Activated T-helper 1 cell treated with anti-CD3 and anti-CD28 coated beads, Interleukin-12 subunit alpha, Interleukin-12 subunit beta, Interleukin-2, Interleukin-4 antibody, amounts not matched to agents 30 ng/mL and 10 ng/mL and 1 ng/mL, durations not matched to agents 14 hours and 24 hours and 36 hours (primary cell): ENCODE measurements at regions of chr17 and their contacts with region 1.

Region 1: DNA sequence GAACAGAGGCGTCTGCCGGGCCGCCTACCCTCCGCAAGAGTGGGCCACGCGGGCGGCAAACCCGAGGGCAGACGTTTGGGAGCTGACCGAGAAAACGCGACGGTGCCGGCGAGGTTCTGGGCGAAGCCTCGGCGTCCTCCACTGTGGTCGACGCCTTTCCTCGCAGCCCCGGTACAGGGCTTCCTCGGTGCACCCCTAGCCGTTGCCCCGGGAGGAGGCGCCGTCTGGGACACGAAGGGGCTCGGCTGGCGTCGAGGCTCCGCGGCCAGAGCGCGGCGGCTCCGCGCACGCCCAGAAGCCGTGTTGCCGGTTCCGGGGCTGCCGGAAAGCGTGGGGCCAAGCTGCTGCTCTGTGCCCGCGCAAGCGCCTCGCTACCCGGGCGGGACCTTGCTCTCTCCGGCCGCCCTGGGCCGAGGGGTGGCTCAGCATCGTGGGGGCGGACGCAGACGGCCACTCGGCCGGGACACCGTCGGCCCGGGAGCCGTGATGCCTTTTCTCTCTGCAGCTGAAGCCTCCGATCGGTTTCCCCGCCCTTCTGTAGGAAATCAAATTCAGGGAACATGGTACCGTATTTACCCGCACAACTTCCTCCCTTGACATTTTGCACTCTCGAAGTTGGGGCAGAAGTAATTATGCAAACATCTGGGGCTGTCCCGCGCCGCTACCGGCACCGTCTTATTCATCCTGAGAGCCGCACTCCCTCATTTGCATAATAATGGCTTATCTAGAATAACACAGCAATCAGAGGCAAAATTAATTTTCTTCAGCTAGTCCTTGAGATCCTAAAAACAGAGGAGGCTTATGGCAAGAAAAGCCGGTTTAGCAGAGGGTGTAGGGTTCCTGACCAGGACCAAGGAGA is 7.3 kb upstream of the CBX8 start:
- DNase-seq: peak; percentile 55
- H3K4me3 Mint-ChIP-seq: peak overlapping the region; percentile 75
- H3K27ac Mint-ChIP-seq: peak overlapping the region; percentile 95
- H3K4me1 Mint-ChIP-seq: peaks cover 48% of the 10 kb centered on the region
- H3K27me3 Mint-ChIP-seq: peaks cover 72% of the 10 kb centered on the region

Region 2: DNA sequence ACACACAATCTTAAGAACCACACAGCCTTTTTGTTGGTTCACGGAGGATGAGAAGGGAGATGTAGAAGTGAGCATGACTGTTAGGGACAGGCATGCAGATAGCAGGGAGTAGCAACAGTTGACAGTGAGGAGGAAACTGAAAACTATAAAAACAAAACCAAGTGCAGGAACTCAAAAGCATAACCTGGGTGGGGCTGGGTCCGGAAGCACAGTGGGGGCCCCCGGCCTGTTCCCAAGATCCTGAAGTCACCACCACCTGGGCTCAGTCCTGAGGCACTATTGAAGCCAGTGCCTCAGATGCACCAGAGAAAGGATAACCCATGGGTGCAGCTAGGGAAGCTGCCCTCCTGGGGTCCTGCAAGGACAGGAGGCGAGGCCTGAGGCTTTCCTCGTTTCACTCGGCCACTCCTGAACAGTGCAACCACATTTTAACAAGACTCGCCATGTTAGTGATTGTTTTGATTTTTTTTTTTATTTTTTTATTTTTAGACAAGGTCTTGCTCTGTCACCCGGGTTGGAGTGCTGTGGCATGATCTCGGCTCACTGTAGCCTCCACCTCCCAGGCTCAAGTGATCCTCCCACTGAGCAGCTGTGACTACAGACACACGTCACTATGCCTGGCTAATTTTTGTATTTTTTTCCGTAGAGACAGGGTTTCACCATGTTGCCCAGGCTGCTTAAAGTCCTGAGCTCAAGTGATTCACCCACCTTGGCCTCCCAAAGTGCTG is 62.7 kb after region 1 on chr17:
- intact Hi-C with region 1: no loop called
- DNase-seq: no peak
- H3K4me3 Mint-ChIP-seq: no peak overlapping the region
- H3K27ac Mint-ChIP-seq: peak overlapping the region; percentile 79
- H3K4me1 Mint-ChIP-seq: peaks cover 17% of the 10 kb centered on the region
- H3K27me3 Mint-ChIP-seq: peaks cover 2% of the 10 kb centered on the region

Region 3: GRCh38 chr17:79991140-79991923 is 187.1 kb after region 1 on chr17:
- intact Hi-C with region 1: loop called (anchors 2 kb)
- DNase-seq: peak; percentile 73
- H3K4me3 Mint-ChIP-seq: peak overlapping the region; percentile 54
- H3K27ac Mint-ChIP-seq: peak overlapping the region; percentile 29
- H3K4me1 Mint-ChIP-seq: peaks cover 24% of the 10 kb centered on the region
- H3K27me3 Mint-ChIP-seq: no peaks in the 10 kb centered on the region

Region 4: DNA sequence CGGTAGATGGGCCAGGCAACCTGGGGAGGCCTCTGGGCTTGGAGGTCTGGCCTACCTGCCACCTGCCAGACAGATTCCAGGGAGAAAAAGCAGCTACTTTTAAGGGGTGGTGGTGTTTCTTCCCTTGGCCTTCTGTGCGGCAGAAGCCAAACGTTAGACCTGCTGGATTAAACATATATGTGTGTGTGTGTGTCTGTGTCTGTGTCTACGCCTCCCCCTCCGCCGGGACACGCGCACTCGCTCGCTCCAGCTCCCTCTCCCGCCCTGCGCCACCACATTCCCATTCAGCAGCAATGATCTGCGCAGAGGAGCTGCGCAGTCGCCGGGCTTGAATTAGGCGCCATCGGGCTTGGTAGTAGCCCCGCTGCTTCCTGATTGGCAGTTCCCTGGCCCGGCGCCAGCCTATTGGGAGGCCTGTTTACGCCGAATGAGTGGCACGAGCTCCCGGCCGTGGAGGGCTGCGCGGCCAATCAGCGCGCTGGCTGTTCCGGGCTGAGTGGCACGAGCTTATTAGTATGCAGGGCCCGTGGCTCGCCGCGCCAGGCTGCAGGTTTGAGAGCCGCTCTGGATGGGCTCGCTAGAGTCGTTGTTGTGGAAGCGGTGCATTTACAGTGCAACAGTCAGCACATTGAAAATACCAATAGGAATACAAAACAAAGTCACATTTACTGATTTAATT is 1590.8 kb after region 1 on chr17 and contains the start of gene BAHCC1:
- intact Hi-C with region 1: loop called (anchors 5 kb)
- DNase-seq: peak; percentile 62
- H3K4me3 Mint-ChIP-seq: peak within 1 kb of the TSS; percentile 74
- H3K27ac Mint-ChIP-seq: peak within 1 kb of the TSS; percentile 63
- H3K4me1 Mint-ChIP-seq: peaks cover 20% of the 10 kb centered on the region
- H3K27me3 Mint-ChIP-seq: peaks cover 43% of the 10 kb centered on the region
- total RNA-seq, gene BAHCC1: 0.02 and 0.08 TPM in 2 replicates